ENCODE measurements at regions of chr3 and their contacts with region 1.

Region 1: DNA sequence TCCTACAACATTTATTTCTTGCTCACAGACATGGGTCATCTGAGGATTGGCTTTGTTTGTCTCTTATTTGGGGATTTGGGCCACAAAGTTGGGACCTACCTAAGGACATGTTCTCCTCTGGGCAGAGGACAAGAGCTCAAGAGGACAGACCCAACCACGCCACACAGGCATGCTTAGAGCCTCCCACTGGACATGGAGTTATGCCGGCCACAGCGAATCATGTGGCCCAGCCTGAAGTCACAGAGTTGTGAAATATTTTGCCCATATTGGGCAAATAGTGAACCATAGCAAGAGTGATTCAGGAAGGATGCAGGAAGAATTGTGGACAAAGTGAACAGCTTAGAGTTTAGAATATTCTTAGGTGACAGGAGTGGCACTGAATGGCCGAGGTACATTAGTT is 9.9 kb downstream of the TRAK1 start:
- DNase-seq: no peak
- H3K4me3 ChIP-seq: no peak overlapping the region
- H3K27ac ChIP-seq: no peak overlapping the region
- H3K4me1 ChIP-seq: peaks cover 5 to 33% (median 29%) of the 10 kb centered on the region in 4 experiments
- H3K27me3 ChIP-seq: no peaks in the 10 kb centered on the region

Region 2: GRCh38 chr3:41961750-41962679 is 139.0 kb before region 1 on chr3 and contains the start of gene ULK4:
- CTCF ChIA-PET with region 1: interaction called, 21 read pairs
- POLR2A ChIA-PET with region 1: interaction called, 3 read pairs
- DNase-seq: peak; percentile 100
- H3K4me3 ChIP-seq: peak within 1 kb of the TSS; percentile 75 to 98 (median 97)
- H3K27ac ChIP-seq: peak within 1 kb of the TSS; percentile 98
- H3K4me1 ChIP-seq: peaks cover 6 to 22% (median 15%) of the 10 kb centered on the region in 4 experiments
- H3K27me3 ChIP-seq: no peaks in the 10 kb centered on the region

Region 3: DNA sequence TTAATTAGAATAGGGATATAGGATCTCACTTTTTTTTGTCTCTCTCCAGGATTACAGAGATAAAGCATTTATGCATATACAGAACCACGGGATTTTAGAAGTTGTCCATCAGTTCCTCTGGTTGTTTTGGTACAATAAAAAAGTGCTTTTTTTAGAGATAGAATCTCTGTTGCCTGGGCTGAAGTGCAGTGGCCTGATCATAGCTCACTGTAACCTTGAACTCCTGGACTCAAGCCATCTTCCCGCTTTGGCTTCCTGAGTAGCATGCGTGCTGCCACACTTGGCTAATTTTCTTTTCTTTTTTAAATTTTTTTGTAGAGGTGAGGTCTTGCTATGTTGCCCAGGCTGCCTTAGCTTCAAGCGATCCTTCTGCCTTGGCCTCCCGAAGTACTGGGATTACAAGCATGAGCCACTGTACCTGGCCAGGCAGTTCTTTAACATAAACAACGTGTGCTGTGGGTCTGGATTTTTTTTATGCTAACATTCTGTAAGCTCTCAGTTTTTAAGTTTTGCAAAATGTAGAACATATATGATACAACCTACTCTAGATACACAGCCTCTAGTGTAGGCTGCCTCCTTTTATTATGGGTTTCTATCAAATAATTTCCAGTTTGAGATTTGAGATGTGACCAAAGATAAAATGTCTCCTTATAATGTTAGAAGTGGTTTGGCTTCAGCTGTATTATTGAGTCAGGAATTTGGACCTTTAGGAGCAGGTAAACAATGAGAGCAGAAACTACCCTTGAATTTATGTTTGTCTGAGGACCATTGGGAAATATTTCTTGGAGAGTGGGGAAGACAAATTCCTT is 81.7 kb before region 1 on chr3:
- CTCF ChIA-PET with region 1: interaction called, 11 read pairs
- POLR2A ChIA-PET with region 1: no interaction called
- DNase-seq: no peak
- H3K4me3 ChIP-seq: no peak overlapping the region
- H3K27ac ChIP-seq: no peak overlapping the region
- H3K4me1 ChIP-seq: peaks cover 19 to 51% (median 33%) of the 10 kb centered on the region in 4 experiments
- H3K27me3 ChIP-seq: no peaks in the 10 kb centered on the region

Region 4: GRCh38 chr3:42081838-42082473 is 19.1 kb before region 1 on chr3:
- CTCF ChIA-PET with region 1: interaction called, 22 read pairs
- POLR2A ChIA-PET with region 1: no interaction called
- DNase-seq: peak in 2 of 3 donors; percentile 36 to 51
- H3K4me3 ChIP-seq: peak overlapping the region in 5 of 7 experiments; percentile 3 to 67 (median 44)
- H3K27ac ChIP-seq: peak overlapping the region; percentile 59 to 83
- H3K4me1 ChIP-seq: peaks cover 10 to 37% (median 25%) of the 10 kb centered on the region in 4 experiments
- H3K27me3 ChIP-seq: no peaks in the 10 kb centered on the region

Region 5: DNA sequence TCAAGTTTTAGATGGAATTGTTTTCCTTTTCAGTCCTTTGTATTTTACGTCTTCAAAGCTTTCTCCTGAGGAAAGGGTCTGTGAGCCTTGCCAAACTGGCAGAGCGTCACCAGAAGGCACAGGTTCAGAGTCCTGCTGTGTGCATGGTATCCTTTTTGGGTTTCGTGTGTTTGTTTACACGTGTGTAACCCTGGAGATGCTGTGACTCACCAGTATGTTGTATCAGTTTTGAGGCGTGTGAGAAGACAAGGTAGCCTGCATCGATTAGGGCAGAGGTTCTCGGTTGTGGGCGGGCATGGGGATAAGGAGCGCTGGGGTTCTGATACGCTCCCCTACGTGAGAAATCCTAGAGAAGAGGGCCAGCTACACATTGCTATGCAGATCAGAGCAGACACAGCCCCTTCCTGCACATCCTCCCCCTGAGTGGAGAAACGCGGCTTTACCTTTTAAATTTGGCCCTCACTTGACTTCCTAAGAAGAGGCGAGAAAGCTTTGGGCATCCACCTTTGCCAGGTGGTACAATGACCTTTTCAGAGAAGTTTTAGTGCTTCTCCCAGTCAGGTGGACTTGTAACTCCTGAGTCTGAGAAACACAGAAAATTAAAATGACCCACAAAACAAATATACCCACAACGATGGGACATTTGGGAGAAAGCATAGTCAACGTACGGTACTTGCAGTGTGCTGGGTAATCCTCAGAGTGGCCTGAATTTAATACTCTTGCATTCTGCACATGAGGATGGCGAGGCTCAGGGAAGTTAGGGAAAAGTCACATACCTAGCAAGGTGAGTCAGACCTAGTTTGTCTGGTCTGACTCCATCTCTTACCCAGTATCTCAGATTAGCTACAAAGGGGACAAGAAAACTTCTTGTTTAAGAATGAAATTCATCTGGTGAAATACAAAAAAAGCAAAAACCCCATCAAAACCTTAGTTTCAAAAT is 28.2 kb after region 1 on chr3:
- CTCF ChIA-PET with region 1: no interaction called
- POLR2A ChIA-PET with region 1: no interaction called
- DNase-seq: peak in 1 of 3 donors; percentile 22
- H3K4me3 ChIP-seq: no peak overlapping the region
- H3K27ac ChIP-seq: no peak overlapping the region
- H3K4me1 ChIP-seq: no peaks in the 10 kb centered on the region
- H3K27me3 ChIP-seq: no peaks in the 10 kb centered on the region